Gastrocnemius medialis (tissue), 4 donors: ENCODE measurements at regions of chr18 and their contacts with region 1.

Region 1: GRCh38 chr18:79405781-79406575 is 10.2 kb downstream of the NFATC1 start:
- DNase-seq: peak; percentile 54 to 59
- ATAC-seq: no peak
- H3K4me3 ChIP-seq: peak overlapping the region in 1 of 4 donors; percentile 3
- H3K27ac ChIP-seq: peak overlapping the region; percentile 88 to 99 (median 94)
- H3K4me1 ChIP-seq: peaks cover 49 to 51% of the 10 kb centered on the region in 2 donors
- H3K27me3 ChIP-seq: no peaks in the 10 kb centered on the region
- CTCF ChIP-seq: no peak
- POLR2A ChIP-seq: peak; percentile 7 to 50

Region 2: GRCh38 chr18:79422022-79422782 is 16.2 kb after region 1 on chr18:
- in situ Hi-C with region 1: no loop called
- intact Hi-C with region 1: loop called (anchors 2 kb)
- DNase-seq: peak in 1 of 2 donors; percentile 56
- ATAC-seq: peak; percentile 59 to 64
- H3K4me3 ChIP-seq: no peak overlapping the region
- H3K27ac ChIP-seq: peak overlapping the region in 1 of 4 donors; percentile 64
- H3K4me1 ChIP-seq: peaks cover 15 to 43% of the 10 kb centered on the region in 2 donors
- H3K27me3 ChIP-seq: no peaks in the 10 kb centered on the region
- CTCF ChIP-seq: no peak
- POLR2A ChIP-seq: no peak

Region 3: GRCh38 chr18:79439201-79440023 is 33.4 kb after region 1 on chr18:
- in situ Hi-C with region 1: no loop called
- intact Hi-C with region 1: loop called (anchors 2 kb)
- DNase-seq: peak; percentile 71 to 86
- ATAC-seq: peak; percentile 85 to 86
- H3K4me3 ChIP-seq: peak overlapping the region; percentile 9 to 34 (median 24)
- H3K27ac ChIP-seq: peak overlapping the region; percentile 81 to 86 (median 84)
- H3K4me1 ChIP-seq: peaks cover 26 to 51% of the 10 kb centered on the region in 2 donors
- H3K27me3 ChIP-seq: no peaks in the 10 kb centered on the region
- CTCF ChIP-seq: no peak
- POLR2A ChIP-seq: peak in 1 of 2 donors; percentile 26